Activated CD8-positive, alpha-beta T cell treated with anti-CD3 and anti-CD28 coated beads, Interleukin-2, amount 10 ng/mL, durations not matched to agents 7 days and 5 days (primary cell): ENCODE measurements at regions of chr17 and their contacts with region 1.

Region 1: GRCh38 chr17:40168262-40168832 is 8.9 kb upstream of the RAPGEFL1 start:
- DNase-seq: peak; percentile 48
- ATAC-seq: peak; percentile 60
- H3K4me3 Mint-ChIP-seq: no peak overlapping the region
- H3K27ac Mint-ChIP-seq: peak overlapping the region; percentile 47
- H3K4me1 Mint-ChIP-seq: peaks cover 6% of the 10 kb centered on the region
- H3K27me3 Mint-ChIP-seq: no peaks in the 10 kb centered on the region

Region 2: DNA sequence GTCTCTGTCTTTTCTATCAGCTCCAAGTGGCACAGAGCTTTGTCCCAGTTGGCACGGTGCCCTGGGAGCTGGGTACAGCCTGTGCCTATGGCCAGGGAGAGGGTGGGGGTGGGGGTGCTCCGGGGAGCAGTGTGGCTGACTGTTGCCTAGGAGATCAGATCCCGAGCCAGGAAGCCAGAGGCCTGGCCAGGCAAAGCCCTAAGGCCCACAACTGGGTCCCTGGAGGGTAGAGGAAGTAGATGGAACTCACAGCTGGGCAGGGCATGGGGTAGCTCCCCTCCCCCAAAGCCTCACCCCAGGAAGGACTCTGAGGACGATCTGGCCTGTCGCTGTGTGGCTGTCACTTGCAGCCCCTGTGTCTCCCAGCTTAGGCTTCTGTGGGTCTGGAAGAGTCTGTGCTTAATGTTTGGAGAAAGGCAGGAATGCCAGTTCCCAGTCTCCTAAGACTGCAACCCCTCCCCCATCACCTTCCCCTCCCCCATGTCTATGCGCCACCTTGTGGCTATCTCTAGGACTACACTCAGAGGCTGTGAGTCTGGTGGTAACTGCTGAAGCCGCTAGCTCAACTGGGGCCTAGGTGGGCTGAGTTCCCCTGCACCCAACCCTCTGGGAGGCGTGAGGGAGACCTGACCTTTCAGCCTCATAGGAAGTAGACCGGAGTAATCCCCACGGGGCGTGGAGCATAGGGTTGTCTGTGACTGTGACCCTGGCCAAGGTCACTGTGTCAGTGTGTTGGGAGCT is 93.0 kb before region 1 on chr17:
- CTCF ChIA-PET with region 1: interaction called, 13 read pairs
- POLR2A ChIA-PET with region 1: no interaction called
- DNase-seq: peak; percentile 75
- ATAC-seq: peak; percentile 83
- H3K4me3 Mint-ChIP-seq: no peak overlapping the region
- H3K27ac Mint-ChIP-seq: peak overlapping the region; percentile 71
- H3K4me1 Mint-ChIP-seq: peaks cover 19% of the 10 kb centered on the region
- H3K27me3 Mint-ChIP-seq: no peaks in the 10 kb centered on the region

Region 3: GRCh38 chr17:40134184-40134583 is 34.2 kb before region 1 on chr17:
- CTCF ChIA-PET with region 1: interaction called, 16 read pairs
- POLR2A ChIA-PET with region 1: interaction called, 8 read pairs
- DNase-seq: no peak
- ATAC-seq: no peak
- H3K4me3 Mint-ChIP-seq: no peak overlapping the region
- H3K27ac Mint-ChIP-seq: no peak overlapping the region
- H3K4me1 Mint-ChIP-seq: peaks cover 16% of the 10 kb centered on the region
- H3K27me3 Mint-ChIP-seq: no peaks in the 10 kb centered on the region

Region 4: GRCh38 chr17:40150276-40150675 is 18.1 kb before region 1 on chr17:
- CTCF ChIA-PET with region 1: interaction called, 33 read pairs
- POLR2A ChIA-PET with region 1: interaction called, 6 read pairs
- DNase-seq: no peak
- ATAC-seq: no peak
- H3K4me3 Mint-ChIP-seq: no peak overlapping the region
- H3K27ac Mint-ChIP-seq: no peak overlapping the region
- H3K4me1 Mint-ChIP-seq: peaks cover 19% of the 10 kb centered on the region
- H3K27me3 Mint-ChIP-seq: no peaks in the 10 kb centered on the region

Region 5: GRCh38 chr17:40191237-40192208 is 23.2 kb after region 1 on chr17:
- CTCF ChIA-PET with region 1: interaction called, 28 read pairs
- POLR2A ChIA-PET with region 1: no interaction called
- DNase-seq: peak; percentile 74
- ATAC-seq: peak; percentile 90
- H3K4me3 Mint-ChIP-seq: peak overlapping the region; percentile 92
- H3K27ac Mint-ChIP-seq: peak overlapping the region; percentile 66
- H3K4me1 Mint-ChIP-seq: peaks cover 27% of the 10 kb centered on the region
- H3K27me3 Mint-ChIP-seq: peaks cover 5% of the 10 kb centered on the region

Region 6: GRCh38 chr17:40224718-40225550 is 56.6 kb after region 1 on chr17:
- CTCF ChIA-PET with region 1: no interaction called
- POLR2A ChIA-PET with region 1: no interaction called
- DNase-seq: no peak
- ATAC-seq: no peak
- H3K4me3 Mint-ChIP-seq: no peak overlapping the region
- H3K27ac Mint-ChIP-seq: no peak overlapping the region
- H3K4me1 Mint-ChIP-seq: peaks cover 18% of the 10 kb centered on the region
- H3K27me3 Mint-ChIP-seq: no peaks in the 10 kb centered on the region